ENCODE measurements at regions of chr3 and their contacts with region 1.

Region 1: GRCh38 chr3:145776782-145777408 is 384.1 kb downstream of the PLOD2 start:
- DNase-seq: peak in 1 of 3 donors; percentile 15
- ATAC-seq: no peak
- H3K4me3 ChIP-seq: no peak overlapping the region
- H3K27ac ChIP-seq: no peak overlapping the region
- H3K4me1 ChIP-seq: no peaks in the 10 kb centered on the region
- H3K27me3 ChIP-seq: no peaks in the 10 kb centered on the region

Region 2: DNA sequence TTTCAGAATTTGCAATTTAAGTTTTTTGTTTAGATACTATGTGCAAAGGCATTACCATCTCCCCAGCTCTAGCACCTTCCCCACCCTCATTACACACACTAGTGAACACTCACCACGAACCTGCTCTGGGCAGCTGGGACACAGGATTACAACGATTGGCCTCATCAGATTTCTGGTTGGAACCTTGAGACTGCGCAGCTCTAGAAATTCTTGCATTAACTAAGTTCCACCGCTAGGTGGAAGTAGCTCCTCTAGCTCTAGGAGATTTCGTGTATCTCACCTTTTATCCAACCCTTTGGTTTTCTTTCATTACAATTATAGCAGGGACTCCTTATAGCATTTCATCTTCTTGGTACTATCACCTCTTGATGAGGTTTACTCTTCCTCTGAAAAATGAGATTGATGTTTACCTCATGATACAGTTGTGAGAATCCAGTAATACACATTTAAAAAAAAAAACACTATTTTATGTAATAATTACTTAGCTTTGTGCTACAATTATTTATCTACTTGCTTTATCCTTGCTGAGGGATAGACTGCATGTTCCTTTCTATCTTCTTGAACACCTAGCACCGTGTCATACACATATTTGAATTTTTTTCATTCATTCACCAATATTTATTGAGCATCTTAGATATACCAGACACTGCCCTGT is 412.8 kb after region 1 on chr3:
- intact Hi-C with region 1: loop called in 1 of 4 experiments (anchors 5 kb)
- DNase-seq: no peak
- ATAC-seq: peak; percentile 76 to 85
- H3K4me3 ChIP-seq: no peak overlapping the region
- H3K27ac ChIP-seq: no peak overlapping the region
- H3K4me1 ChIP-seq: no peaks in the 10 kb centered on the region
- H3K27me3 ChIP-seq: no peaks in the 10 kb centered on the region